B cell (primary cell): ENCODE measurements at regions of chr1 and their contacts with region 1.

Region 1: GRCh38 chr1:202888531-202889360 is at the start of gene RABIF:
- DNase-seq: peak; percentile 98
- ATAC-seq: peak; percentile 92
- H3K4me3 ChIP-seq: peak within 1 kb of the TSS; percentile 65 to 87 (median 78)
- H3K4me3 Mint-ChIP-seq: peak within 1 kb of the TSS; percentile 91
- H3K27ac ChIP-seq: peak within 1 kb of the TSS; percentile 85 to 89
- H3K27ac Mint-ChIP-seq: peak within 1 kb of the TSS; percentile 96
- H3K4me1 ChIP-seq: peaks cover 11 to 17% of the 10 kb centered on the region in 2 donors
- H3K4me1 Mint-ChIP-seq: peaks cover 18% of the 10 kb centered on the region
- H3K27me3 ChIP-seq: no peaks in the 10 kb centered on the region
- H3K27me3 Mint-ChIP-seq: no peaks in the 10 kb centered on the region
- CTCF ChIP-seq: no peak
- total RNA-seq, gene RABIF: 14.2 and 16.5 TPM in 2 replicates

Region 2: DNA sequence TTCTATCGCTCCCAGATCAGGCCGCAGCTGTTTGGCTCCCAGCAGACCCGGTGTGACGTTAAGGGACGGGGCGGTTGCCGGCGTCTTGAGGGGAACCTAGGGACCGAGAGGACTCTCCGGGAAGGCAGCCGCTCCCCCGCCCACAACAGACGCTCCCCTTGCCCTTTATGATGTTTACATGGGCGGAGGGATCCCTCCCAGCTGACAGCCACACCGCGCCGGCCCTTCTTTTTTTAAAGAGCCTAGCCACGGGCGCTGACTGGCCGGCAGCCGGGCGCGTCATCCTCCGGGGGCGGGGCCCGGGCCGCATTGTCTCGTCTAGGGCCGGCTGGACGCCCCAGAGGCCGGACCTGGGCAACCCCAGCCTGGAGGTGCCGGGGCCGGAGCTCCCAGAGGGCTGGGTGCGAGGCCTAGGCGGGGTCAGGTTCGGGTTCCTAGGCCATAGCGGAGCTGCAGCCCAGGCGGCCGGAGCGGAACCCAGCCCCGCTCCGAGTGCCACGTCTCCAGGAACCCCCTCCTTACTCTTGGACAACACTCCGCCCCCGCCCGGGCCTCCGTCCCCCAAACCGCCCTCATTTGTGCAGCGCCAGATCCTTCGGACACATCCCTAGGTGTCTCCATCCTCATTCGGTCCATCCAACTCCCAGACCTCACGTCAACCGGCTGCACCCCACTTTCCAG is 78.0 kb before region 1 on chr1 and contains the start of gene PCAT6:
- CTCF ChIA-PET with region 1: no interaction called
- POLR2A ChIA-PET with region 1: interaction called, 3 read pairs
- intact Hi-C with region 1: loop called (anchors 1 kb)
- DNase-seq: peak; percentile 93
- ATAC-seq: peak; percentile 81
- H3K4me3 ChIP-seq: peak within 1 kb of the TSS; percentile 72 to 91 (median 86)
- H3K4me3 Mint-ChIP-seq: peak within 1 kb of the TSS; percentile 87
- H3K27ac ChIP-seq: peak within 1 kb of the TSS; percentile 35 to 69
- H3K27ac Mint-ChIP-seq: peak within 1 kb of the TSS; percentile 91
- H3K4me1 ChIP-seq: peaks cover 23 to 33% of the 10 kb centered on the region in 2 donors
- H3K4me1 Mint-ChIP-seq: peaks cover 32% of the 10 kb centered on the region
- H3K27me3 ChIP-seq: peaks cover 0 to 15% (median 2%) of the 10 kb centered on the region in 4 experiments
- H3K27me3 Mint-ChIP-seq: peaks cover 6% of the 10 kb centered on the region
- CTCF ChIP-seq: no peak
- total RNA-seq, gene PCAT6: 1.6 TPM in 1 of 2 replicates, not detected in the other

Region 3: DNA sequence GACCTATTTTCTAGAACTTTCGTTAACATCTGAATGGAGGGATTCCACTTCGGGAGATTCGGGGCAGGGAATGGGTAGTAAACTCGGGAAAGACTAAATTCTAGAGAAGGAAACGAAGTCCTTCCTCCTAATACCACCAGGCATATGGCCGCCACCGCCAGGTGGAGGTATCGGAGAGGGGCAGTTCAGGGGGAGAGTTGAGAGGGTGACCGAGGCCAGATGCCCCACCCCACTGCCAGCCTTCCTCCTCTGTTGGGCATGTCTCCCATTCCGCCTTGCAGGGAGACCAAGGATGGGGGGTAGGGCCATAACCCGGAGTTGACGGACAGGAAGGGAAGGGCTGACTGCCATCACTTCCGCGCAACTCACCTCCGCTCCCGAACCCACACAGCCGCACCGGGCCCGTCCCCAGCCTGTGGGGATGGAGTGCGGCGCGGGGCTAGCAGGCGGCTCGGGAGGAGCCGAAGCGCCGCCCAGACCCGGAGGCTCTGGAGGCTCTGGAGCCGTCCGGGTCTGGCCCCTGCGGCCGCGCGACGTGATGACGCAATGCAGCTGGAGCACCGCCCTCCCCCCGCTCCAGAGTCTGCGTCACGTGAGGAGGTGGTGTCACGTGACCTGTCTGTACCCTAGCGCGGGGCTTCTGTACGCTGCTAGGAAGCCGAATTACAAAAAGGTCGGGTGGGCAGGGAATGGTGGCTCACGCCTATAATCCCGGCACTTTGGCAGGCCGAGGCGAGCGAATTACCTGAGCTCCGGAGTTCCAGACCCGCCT is 38.2 kb after region 1 on chr1 and contains the start of gene KLHL12:
- CTCF ChIA-PET with region 1: no interaction called
- POLR2A ChIA-PET with region 1: no interaction called
- intact Hi-C with region 1: loop called (anchors 1 kb)
- DNase-seq: peak; percentile 97
- ATAC-seq: peak; percentile 94
- H3K4me3 ChIP-seq: peak within 1 kb of the TSS; percentile 92 to 99 (median 94)
- H3K4me3 Mint-ChIP-seq: peak within 1 kb of the TSS; percentile 94
- H3K27ac ChIP-seq: peak within 1 kb of the TSS; percentile 89 to 95
- H3K27ac Mint-ChIP-seq: peak within 1 kb of the TSS; percentile 97
- H3K4me1 ChIP-seq: peaks cover 9 to 14% of the 10 kb centered on the region in 2 donors
- H3K4me1 Mint-ChIP-seq: peaks cover 21% of the 10 kb centered on the region
- H3K27me3 ChIP-seq: no peaks in the 10 kb centered on the region
- H3K27me3 Mint-ChIP-seq: no peaks in the 10 kb centered on the region
- CTCF ChIP-seq: peak; percentile 81
- total RNA-seq, gene KLHL12: 25.5 and 26.1 TPM in 2 replicates

Region 4: GRCh38 chr1:202968840-202969295 is 80.1 kb after region 1 on chr1:
- CTCF ChIA-PET with region 1: no interaction called
- POLR2A ChIA-PET with region 1: interaction called, 5 read pairs
- intact Hi-C with region 1: loop called (anchors 2 kb)
- DNase-seq: peak; percentile 90
- ATAC-seq: peak; percentile 62
- H3K4me3 ChIP-seq: peak overlapping the region in 4 of 5 experiments; percentile 8 to 69 (median 50)
- H3K4me3 Mint-ChIP-seq: peak overlapping the region; percentile 97
- H3K27ac ChIP-seq: peak overlapping the region; percentile 73 to 75
- H3K27ac Mint-ChIP-seq: peak overlapping the region; percentile 95
- H3K4me1 ChIP-seq: peaks cover 28 to 38% of the 10 kb centered on the region in 2 donors
- H3K4me1 Mint-ChIP-seq: peaks cover 39% of the 10 kb centered on the region
- H3K27me3 ChIP-seq: no peaks in the 10 kb centered on the region
- H3K27me3 Mint-ChIP-seq: no peaks in the 10 kb centered on the region
- CTCF ChIP-seq: peak; percentile 74

Region 5: GRCh38 chr1:203006948-203007871 is 118.5 kb after region 1 on chr1 and contains the start of gene TMEM183A:
- CTCF ChIA-PET with region 1: no interaction called
- POLR2A ChIA-PET with region 1: interaction called, 4 read pairs
- intact Hi-C with region 1: loop called (anchors 1 kb)
- DNase-seq: peak; percentile 96
- ATAC-seq: peak; percentile 90
- H3K4me3 ChIP-seq: peak within 1 kb of the TSS; percentile 89 to 99 (median 95)
- H3K4me3 Mint-ChIP-seq: peak within 1 kb of the TSS; percentile 99
- H3K27ac ChIP-seq: peak within 1 kb of the TSS; percentile 89 to 96
- H3K27ac Mint-ChIP-seq: peak within 1 kb of the TSS; percentile 96
- H3K4me1 ChIP-seq: peaks cover 16 to 17% of the 10 kb centered on the region in 2 donors
- H3K4me1 Mint-ChIP-seq: peaks cover 32% of the 10 kb centered on the region
- H3K27me3 ChIP-seq: no peaks in the 10 kb centered on the region
- H3K27me3 Mint-ChIP-seq: no peaks in the 10 kb centered on the region
- CTCF ChIP-seq: no peak
- total RNA-seq, gene TMEM183A: 64.8 and 65.2 TPM in 2 replicates